ENCODE measurements at regions of chr11 and their contacts with region 1.

Region 1: DNA sequence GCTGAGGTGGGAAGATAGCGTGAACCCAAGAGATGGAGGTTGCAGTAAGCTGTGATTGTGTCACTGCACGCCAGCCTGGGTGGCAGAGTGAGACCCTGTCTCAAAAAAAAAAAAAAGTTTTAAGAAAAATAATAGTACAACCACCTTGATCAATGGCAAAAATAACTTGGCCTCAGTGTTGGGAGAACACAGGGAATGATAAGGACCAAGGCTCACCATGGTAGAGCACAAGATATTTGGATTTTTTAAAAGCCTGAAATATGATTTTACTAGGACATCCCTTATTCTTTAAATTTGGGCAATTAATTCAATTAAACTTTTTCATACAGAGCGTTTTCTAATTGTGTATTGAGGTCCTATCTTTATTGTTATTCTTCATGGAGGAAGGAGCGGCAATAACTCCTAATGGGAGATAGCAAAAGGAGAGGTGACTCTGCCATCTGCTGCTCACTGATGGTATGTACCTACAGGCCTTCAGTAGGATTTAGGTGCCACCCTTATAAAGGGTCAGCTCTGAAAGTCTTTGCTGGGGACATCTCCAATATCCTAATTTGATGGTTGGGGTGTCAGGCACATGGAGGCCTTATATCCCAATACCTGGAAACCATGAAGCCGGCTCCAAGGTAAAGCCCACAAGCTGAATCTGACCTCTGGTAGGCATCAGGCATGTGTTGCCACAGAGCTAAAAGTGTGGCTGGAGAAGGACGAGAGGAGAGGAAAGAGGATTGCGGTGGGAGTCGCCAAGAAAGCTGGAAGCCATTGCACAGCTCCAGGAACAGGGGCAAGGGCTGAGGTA is 21.9 kb upstream of the POLD3 start:
- DNase-seq: peak; percentile 70 to 83
- ATAC-seq: peak; percentile 93 to 97
- H3K4me3 ChIP-seq: no peak overlapping the region
- H3K27ac ChIP-seq: no peak overlapping the region
- H3K4me1 ChIP-seq: peaks cover 12% of the 10 kb centered on the region; the same call in 1 of the 3 replicates
- CTCF ChIP-seq: peak; percentile 91
- EP300 ChIP-seq: no peak
- POLR2A ChIP-seq: no peak
- RAD21 ChIP-seq: peak; percentile 91 to 95

Region 2: GRCh38 chr11:74443071-74443864 is 127.2 kb before region 1 on chr11:
- CTCF ChIA-PET with region 1: interaction called, 387 read pairs
- POLR2A ChIA-PET with region 1: interaction called, 7 read pairs
- DNase-seq: peak; percentile 44 to 74
- ATAC-seq: peak; percentile 89 to 95
- H3K4me3 ChIP-seq: no peak overlapping the region
- H3K27ac ChIP-seq: peak overlapping the region; percentile 62 to 71
- H3K4me1 ChIP-seq: peaks cover 20% of the 10 kb centered on the region
- CTCF ChIP-seq: peak; percentile 69
- EP300 ChIP-seq: no peak
- POLR2A ChIP-seq: no peak
- RAD21 ChIP-seq: peak; percentile 84 to 88

Region 3: GRCh38 chr11:74462009-74462408 is 108.5 kb before region 1 on chr11:
- CTCF ChIA-PET with region 1: interaction called, 39 read pairs
- POLR2A ChIA-PET with region 1: no interaction called
- DNase-seq: no peak
- ATAC-seq: no peak
- H3K4me3 ChIP-seq: no peak overlapping the region
- H3K27ac ChIP-seq: peak overlapping the region in 1 of 2 experiments; percentile 29; a peak in 3 of 6 replicates
- H3K4me1 ChIP-seq: peaks cover 32% of the 10 kb centered on the region
- CTCF ChIP-seq: no peak
- EP300 ChIP-seq: no peak
- POLR2A ChIP-seq: no peak
- RAD21 ChIP-seq: no peak

Region 4: DNA sequence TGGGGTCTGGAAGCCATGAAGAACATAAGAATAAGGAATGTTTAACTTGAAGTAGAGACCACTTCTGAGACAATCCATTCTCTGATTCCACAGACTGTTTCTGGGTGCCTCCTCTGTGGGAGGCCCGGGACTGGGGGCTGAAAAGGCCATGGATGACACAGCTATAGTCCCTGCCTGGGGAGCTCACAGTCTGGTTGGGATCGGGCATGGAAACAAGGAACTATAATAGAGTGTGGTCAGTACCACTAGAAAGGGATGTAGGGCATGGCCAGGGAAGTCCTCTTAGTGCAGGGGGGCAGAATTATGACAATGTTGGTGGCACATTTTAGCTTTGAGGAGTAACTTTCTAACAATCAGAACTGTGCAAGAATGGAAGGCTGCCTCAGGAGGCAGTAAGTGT is 93.9 kb before region 1 on chr11:
- CTCF ChIA-PET with region 1: interaction called, 13 read pairs
- POLR2A ChIA-PET with region 1: no interaction called
- DNase-seq: no peak
- ATAC-seq: 0 out of 6 replicates have a peak, but pooled peaks of 1 of the 2 experiments have one; percentile 19
- H3K4me3 ChIP-seq: no peak overlapping the region
- H3K27ac ChIP-seq: no peak overlapping the region
- H3K4me1 ChIP-seq: 0 out of 3 replicates have a peak, but pooled peaks cover 6% of the 10 kb centered on the region
- CTCF ChIP-seq: no peak
- EP300 ChIP-seq: no peak
- POLR2A ChIP-seq: no peak
- RAD21 ChIP-seq: no peak

Region 5: GRCh38 chr11:74492974-74493790 is 77.3 kb before region 1 on chr11 and contains the start of gene LIPT2:
- CTCF ChIA-PET with region 1: interaction called, 19 read pairs
- POLR2A ChIA-PET with region 1: interaction called, 19 read pairs
- DNase-seq: peak; percentile 81 to 99
- ATAC-seq: peak; percentile 95 to 98
- H3K4me3 ChIP-seq: peak within 1 kb of the TSS; percentile 62
- H3K27ac ChIP-seq: peak within 1 kb of the TSS; percentile 93 to 98
- H3K4me1 ChIP-seq: peaks cover 14% of the 10 kb centered on the region; the same call in 2 of the 3 replicates
- CTCF ChIP-seq: no peak
- EP300 ChIP-seq: no peak
- POLR2A ChIP-seq: peak; percentile 78
- RAD21 ChIP-seq: no peak
- polyA plus RNA-seq, gene LIPT2: 9.8 and 12.9 TPM in 2 replicates

Region 6: DNA sequence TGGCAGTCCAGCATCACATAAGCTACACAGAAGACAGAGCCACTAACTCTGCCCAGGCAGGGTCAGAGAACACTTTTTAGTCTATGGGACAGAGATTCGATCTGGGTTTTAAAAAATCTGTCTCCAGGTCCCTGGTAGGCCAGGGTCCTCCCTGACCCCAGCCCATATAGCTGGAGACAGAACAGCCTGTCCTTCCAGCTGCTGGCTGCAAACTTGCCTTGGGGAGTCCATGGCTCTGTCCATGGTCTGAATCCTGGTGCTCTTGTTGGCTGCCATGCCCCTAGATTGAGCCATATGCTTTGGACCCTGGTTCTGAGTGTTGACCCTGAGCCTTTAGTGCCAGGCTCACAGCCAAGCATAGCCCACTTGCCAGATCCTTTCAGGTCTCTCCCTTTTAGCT is 63.6 kb before region 1 on chr11:
- CTCF ChIA-PET with region 1: interaction called, 12 read pairs
- POLR2A ChIA-PET with region 1: no interaction called
- DNase-seq: no peak
- ATAC-seq: no peak
- H3K4me3 ChIP-seq: no peak overlapping the region
- H3K27ac ChIP-seq: no peak overlapping the region
- H3K4me1 ChIP-seq: peaks cover 15% of the 10 kb centered on the region
- CTCF ChIP-seq: no peak
- EP300 ChIP-seq: no peak
- POLR2A ChIP-seq: no peak
- RAD21 ChIP-seq: no peak

Region 7: DNA sequence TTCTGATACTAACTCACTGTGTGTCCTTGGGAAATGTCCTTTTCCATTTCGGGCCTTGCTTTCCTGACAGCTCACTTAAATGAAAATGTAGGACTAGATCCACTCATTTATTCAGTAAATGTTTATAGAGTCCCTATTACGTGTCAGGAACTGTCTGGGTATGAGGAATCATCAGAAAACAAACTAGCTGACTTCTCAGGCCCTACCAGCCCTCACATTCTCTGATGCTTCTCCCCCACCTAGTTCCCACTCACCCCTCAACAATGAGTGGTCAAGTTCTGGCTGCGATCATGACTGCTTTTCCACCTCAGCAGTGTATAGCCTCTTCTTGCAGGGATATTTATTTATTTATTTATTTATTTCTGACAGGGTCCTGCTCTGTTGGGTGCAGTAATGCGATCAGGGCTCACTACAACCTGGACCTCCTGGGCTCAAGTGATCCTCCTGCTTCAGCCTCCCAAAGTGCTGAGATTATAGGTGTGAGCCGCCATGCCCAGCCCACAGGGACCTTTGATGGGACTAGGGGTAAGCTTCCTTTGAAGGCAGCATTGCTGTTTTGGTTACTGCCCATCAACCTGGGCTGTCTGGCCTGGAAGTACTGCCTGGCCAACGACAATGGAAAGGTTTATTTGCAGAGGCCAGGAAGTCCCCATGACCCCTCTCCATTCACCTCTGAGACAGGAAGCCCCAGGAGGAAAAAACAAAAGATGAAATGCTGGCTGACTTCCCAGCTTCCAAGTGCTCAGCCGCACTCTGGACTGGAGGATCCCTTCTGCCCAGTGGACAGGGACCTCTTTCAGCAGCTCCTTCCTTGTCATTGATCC is 11.1 kb before region 1 on chr11:
- CTCF ChIA-PET with region 1: interaction called, 26 read pairs
- POLR2A ChIA-PET with region 1: no interaction called
- DNase-seq: no peak
- ATAC-seq: peak; percentile 34 to 48; a peak in 3 of 6 replicates
- H3K4me3 ChIP-seq: no peak overlapping the region
- H3K27ac ChIP-seq: peak overlapping the region in 1 of 2 experiments; percentile 37; a peak in 3 of 6 replicates
- H3K4me1 ChIP-seq: peaks cover 9% of the 10 kb centered on the region
- CTCF ChIP-seq: no peak
- EP300 ChIP-seq: no peak
- POLR2A ChIP-seq: no peak
- RAD21 ChIP-seq: no peak